ENCODE measurements at regions of chr9 and their contacts with region 1.

Region 1: DNA sequence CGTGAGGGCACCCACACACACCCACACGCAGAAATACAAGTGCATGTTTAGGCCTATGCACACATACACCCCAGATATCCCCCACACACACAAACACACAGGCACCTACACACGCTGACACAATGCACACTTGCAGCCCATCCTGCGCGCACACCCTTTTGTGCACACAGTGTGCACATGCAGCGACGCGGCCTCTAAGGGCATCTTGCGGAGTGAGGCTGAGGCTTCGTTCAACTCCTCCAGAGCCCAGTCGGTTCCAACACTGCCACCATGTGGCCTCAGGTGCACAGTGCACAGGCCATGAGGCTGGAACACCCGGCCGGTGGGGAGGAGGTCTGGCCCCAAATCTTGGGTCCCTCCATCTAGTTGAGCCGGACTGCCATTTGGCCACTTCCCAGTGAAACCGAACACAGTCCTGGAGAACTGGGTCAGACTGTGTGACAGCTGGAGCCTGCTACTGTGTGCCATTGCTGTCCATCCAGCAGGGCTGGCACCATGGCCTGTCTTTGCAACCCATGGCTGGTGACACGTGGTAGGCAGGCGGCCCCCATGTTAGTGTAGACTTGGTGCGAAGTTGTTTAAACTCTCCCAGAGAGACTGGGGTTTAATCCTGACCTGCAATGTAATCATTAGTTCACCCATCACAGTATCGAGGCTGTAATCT is 97.7 kb upstream of the MVB12B start:
- DNase-seq: peak; percentile 67 to 74 (median 70)
- ATAC-seq: peak; percentile 70
- H3K4me3 ChIP-seq: no peak overlapping the region
- H3K27ac ChIP-seq: no peak overlapping the region
- H3K4me1 ChIP-seq: no peaks in the 10 kb centered on the region
- H3K27me3 ChIP-seq: no peaks in the 10 kb centered on the region
- CTCF ChIP-seq: peak; percentile 79 to 93 (median 88)
- POLR2A ChIP-seq: no peak

Region 2: DNA sequence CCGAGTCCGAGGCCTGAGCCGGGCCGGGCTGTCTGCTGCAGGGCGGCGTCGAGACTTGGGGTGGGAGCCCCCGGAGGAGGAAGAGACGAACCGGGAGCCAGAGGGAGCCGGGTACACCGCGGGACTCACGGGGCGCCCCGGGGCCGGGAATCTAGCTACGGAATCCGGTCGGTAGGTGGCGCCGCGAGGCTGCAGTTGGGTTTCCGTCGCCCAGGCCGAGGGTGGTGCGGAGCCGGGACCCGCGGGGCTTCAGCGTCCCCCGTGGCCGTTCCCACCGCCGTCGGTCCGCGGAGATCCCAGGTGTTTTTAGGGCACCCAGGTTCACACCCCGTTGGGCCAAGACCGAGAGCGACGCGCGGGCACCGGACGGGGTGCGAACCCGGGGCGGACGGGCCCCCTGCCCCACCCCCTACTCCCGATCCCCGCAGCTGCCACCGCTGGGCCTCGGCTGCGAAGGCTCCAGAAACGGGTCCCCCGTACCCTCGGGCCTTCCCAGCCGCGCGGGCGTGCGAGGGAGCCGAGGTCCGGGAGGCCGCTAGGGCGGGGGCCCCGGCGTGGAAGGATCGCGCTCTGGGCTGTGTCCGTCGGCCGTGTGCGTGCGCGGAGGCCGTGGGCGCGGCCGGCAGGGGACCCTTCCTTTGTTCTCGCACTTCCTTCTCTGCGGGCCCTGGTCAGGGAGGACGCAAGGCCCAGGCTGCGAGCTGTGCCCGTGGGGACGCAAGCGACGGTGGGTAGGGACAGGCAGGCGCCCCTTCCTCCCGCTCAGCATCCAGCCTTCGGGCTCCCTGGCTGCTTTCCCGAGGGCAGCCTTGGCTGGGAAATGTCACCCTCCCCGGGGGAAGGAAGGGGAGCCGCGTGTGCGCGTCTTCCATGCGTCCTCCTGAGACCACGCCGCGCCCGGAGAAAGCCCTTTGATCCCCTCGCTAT is 820.7 kb before region 1 on chr9:
- intact Hi-C with region 1: loop called (anchors 5 kb)
- DNase-seq: peak; percentile 66 to 75 (median 70)
- ATAC-seq: peak; percentile 81
- H3K4me3 ChIP-seq: peak overlapping the region in 1 of 2 donors; percentile 21
- H3K27ac ChIP-seq: no peak overlapping the region
- H3K4me1 ChIP-seq: peaks cover 11% of the 10 kb centered on the region
- H3K27me3 ChIP-seq: peaks cover 0 to 8% of the 10 kb centered on the region in 2 donors
- CTCF ChIP-seq: peak; percentile 54 to 87 (median 78)
- POLR2A ChIP-seq: no peak

Measured in body of pancreas (tissue), 4 donors.